ENCODE measurements at regions of chr16 and their contacts with region 1.

Region 1: DNA sequence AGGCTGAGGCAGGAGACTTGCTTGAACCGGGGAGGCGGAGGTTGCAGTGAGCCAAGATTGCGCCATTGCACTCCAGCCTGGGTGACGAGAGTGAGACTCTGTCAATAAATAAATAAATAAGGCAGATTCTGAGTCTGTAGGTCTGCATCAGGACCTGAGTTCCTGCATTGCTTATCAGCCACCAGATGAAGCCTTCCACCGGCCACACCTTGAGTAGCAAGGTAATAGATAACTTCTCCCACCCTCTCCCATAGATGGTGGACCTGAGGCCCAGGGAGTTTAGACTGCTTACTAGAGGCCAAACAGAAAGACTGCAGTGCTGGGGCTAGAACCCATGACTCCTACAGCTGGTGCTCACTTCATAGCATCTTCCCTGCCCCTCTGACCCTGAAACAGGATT is 22.1 kb downstream of the ZP2 start:
- DNase-seq: no peak
- H3K4me3 Mint-ChIP-seq: no peak overlapping the region
- H3K27ac Mint-ChIP-seq: no peak overlapping the region
- H3K4me1 Mint-ChIP-seq: peaks cover 5% of the 10 kb centered on the region
- H3K27me3 Mint-ChIP-seq: peaks cover 5% of the 10 kb centered on the region

Region 2: DNA sequence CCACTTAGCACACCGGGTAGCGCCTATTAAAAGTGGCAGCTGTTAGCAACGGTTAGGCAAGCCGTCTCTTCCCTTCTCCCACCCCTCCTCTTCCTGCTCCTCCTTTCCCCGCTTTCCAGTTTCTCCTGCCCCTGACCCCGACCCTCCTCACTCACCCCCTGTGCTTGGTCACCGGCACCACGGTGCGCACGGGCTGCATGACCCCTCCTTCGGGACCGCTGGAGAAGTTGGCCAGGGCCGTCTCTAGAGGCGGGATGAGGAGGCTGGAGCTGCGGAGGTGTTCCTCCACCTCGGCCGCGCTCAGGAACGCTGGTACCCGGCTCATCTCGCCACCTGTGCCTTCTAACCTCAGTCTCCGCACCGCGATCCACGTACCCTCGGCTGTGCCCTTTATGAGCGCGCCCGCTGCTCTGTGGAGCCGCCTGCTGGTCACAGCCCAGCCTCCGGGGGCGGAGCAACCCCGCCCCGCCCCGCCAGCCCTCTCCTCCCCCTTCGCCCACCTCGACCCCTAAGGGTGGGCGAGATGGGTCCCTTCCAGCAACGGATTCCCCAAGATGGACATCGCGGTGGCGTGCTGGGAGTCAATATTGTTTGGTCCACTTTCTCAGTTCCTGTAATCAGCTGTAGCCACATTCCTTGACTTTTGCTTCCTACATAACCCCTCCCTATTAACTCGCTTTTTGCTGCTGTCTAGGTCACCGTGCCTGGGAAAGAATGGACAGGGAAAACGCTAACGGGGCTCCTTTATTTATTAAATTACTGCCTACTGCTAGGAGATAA is 88.8 kb after region 1 on chr16 and contains the start of gene CRYM:
- CTCF ChIA-PET with region 1: interaction called, 15 read pairs
- DNase-seq: peak; percentile 66
- H3K4me3 Mint-ChIP-seq: peak within 1 kb of the TSS; percentile 35
- H3K27ac Mint-ChIP-seq: no peak within 1 kb of the TSS
- H3K4me1 Mint-ChIP-seq: peaks cover 5% of the 10 kb centered on the region
- H3K27me3 Mint-ChIP-seq: peaks cover 80% of the 10 kb centered on the region

Region 3: GRCh38 chr16:21300309-21301167 is 111.2 kb after region 1 on chr16:
- CTCF ChIA-PET with region 1: interaction called, 23 read pairs
- DNase-seq: peak; percentile 77
- H3K4me3 Mint-ChIP-seq: peak overlapping the region; percentile 90
- H3K27ac Mint-ChIP-seq: peak overlapping the region; percentile 26
- H3K4me1 Mint-ChIP-seq: peaks cover 24% of the 10 kb centered on the region
- H3K27me3 Mint-ChIP-seq: peaks cover 30% of the 10 kb centered on the region

Region 4: DNA sequence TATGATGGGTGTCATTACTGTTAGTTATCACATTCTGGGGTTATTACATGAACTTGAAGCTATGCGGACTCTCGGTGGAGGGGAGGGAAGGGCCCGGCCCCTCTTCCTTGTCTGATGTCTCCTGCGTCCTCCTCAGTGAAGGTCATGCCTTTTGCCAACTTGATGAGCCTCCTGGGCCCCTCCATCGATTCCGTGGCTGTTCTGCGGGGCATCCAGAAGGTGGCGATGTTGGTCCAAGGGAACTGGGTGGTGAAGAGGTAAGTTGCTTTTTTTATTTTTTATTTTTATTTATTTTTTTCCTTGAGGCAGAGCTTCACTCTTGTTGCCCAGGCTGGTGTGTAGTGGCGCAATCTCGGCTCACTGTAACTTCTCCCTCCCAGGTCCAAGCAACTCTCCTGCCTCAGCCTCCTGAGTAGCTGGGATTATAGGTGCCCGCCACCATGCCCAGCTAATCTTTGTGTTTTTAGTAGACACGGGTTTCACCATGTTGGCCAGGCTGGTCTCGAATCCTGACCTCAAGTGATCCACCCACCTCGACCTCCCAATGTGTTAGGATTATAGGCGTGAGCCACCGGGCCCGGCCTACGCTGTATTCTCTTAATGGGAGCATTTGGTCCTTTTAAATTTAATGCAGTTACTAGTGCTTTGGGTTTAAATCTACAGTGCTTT is 1129.5 kb after region 1 on chr16:
- CTCF ChIA-PET with region 1: interaction called, 11 read pairs
- DNase-seq: peak; percentile 76
- H3K4me3 Mint-ChIP-seq: no peak overlapping the region
- H3K27ac Mint-ChIP-seq: peak overlapping the region; percentile 46
- H3K4me1 Mint-ChIP-seq: peaks cover 4% of the 10 kb centered on the region
- H3K27me3 Mint-ChIP-seq: no peaks in the 10 kb centered on the region

Measured in activated naive CD4-positive, alpha-beta T cell treated with anti-CD3 and anti-CD28 coated beads, Interleukin-2, amount 10 ng/mL, durations not matched to agents 7 days and 5 days (primary cell).